Activated naive CD8-positive, alpha-beta T cell treated with anti-CD3 and anti-CD28 coated beads, Interleukin-2, amount 10 ng/mL, durations not matched to agents 7 days and 5 days (primary cell): ENCODE measurements at regions of chr13 and their contacts with region 1.

Region 1: GRCh38 chr13:40666045-40666904 is at the start of gene FOXO1:
- DNase-seq: peak; percentile 97
- ATAC-seq: peak; percentile 66
- H3K4me3 Mint-ChIP-seq: peak within 1 kb of the TSS; percentile 90
- H3K27ac Mint-ChIP-seq: peak within 1 kb of the TSS; percentile 92
- H3K4me1 Mint-ChIP-seq: peaks cover 38% of the 10 kb centered on the region
- H3K27me3 Mint-ChIP-seq: no peaks in the 10 kb centered on the region
- total RNA-seq, gene FOXO1: 36.7 to 39.8 TPM

Region 2: DNA sequence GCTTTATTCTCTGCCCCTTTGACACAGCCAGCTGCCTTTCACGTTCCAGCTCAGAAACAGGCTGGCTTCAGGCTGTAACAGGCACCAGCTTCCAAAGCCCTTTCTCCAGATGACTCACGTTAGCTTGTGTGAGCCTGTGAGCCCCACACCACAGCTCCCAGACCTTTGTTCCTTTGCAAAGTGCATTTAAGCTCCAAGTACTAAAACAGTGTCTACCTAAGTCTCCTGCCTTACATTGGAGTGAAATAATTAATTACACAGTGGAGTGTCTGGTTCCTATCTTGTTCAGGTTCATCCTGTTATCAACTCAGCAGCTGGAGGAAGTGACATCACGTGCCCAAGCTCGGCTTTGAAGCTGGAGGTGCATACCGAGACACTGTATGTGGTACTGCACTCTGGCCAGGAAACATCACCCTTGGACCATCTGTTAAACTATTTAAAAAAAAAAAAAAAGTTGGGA is 475.6 kb before region 1 on chr13:
- POLR2A ChIA-PET with region 1: interaction called, 28 read pairs
- DNase-seq: peak; percentile 59
- ATAC-seq: peak; percentile 32
- H3K4me3 Mint-ChIP-seq: peak overlapping the region; percentile 80
- H3K27ac Mint-ChIP-seq: peak overlapping the region; percentile 97
- H3K4me1 Mint-ChIP-seq: peaks cover 58% of the 10 kb centered on the region
- H3K27me3 Mint-ChIP-seq: no peaks in the 10 kb centered on the region

Region 3: DNA sequence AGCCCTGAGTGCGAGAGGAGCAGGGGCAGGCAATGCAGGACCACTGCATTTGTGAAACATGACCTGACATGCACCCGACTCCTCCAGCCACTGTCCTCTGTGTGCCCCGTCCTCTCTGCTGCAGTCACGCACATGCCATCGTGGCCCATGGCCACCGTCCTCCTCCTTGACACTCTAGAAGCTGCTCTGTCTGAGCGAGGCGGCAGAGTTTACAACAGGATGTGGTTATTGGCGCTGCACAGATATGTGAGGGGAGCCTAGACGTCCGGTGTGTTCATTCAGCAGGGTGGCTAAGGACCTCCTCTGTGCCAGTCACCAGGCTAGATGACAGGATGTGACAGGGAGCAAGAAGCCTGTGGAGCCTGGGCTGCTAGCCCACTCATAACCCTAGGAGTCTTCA is 277.7 kb before region 1 on chr13:
- POLR2A ChIA-PET with region 1: interaction called, 22 read pairs
- DNase-seq: peak; percentile 77
- ATAC-seq: peak; percentile 98
- H3K4me3 Mint-ChIP-seq: peak overlapping the region; percentile 83
- H3K27ac Mint-ChIP-seq: peak overlapping the region; percentile 98
- H3K4me1 Mint-ChIP-seq: peaks cover 52% of the 10 kb centered on the region
- H3K27me3 Mint-ChIP-seq: no peaks in the 10 kb centered on the region

Region 4: DNA sequence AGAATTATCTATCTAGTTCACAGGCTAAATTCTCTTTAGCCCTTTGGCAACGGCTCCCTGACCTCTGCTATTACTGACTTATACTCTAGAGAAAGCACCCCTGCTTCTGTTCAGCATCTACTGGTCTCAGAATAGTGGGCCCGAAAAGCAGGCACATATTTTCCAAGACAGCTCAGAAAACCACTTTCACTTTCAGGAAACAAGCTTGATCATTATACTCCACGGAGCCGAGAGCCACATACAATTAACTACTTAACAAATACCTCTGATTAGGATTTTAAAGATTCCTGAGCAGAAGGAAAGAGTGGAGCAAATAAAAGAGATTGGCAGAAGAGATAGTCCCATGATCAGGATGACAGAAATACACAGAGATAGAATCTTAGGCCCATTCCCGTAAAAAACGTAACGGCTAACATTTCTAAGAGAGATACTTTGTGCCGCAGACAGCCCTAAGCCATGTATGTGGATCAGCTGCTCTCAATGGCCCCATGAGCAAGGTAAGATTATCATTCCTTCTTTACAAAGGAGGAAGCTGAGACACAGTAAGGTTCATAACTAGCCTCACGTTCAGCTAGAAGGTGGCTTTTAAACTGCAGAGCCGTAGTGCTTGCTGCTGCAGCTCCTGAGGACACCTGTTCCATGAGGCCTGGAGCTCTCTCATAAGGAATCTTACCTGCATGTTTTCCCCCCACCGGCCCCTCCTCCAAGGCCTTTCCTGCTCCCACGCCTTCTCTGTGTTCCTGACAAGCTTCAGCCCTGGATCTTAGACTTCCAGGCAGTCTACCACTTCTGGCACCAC is 227.1 kb before region 1 on chr13:
- POLR2A ChIA-PET with region 1: interaction called, 18 read pairs
- DNase-seq: no peak
- ATAC-seq: peak; percentile 69
- H3K4me3 Mint-ChIP-seq: peak overlapping the region; percentile 72
- H3K27ac Mint-ChIP-seq: peak overlapping the region; percentile 59
- H3K4me1 Mint-ChIP-seq: peaks cover 31% of the 10 kb centered on the region
- H3K27me3 Mint-ChIP-seq: no peaks in the 10 kb centered on the region

Region 5: GRCh38 chr13:40485611-40486517 is 180.4 kb before region 1 on chr13:
- POLR2A ChIA-PET with region 1: interaction called, 28 read pairs
- DNase-seq: peak; percentile 67
- ATAC-seq: peak; percentile 91
- H3K4me3 Mint-ChIP-seq: peak overlapping the region; percentile 43
- H3K27ac Mint-ChIP-seq: peak overlapping the region; percentile 89
- H3K4me1 Mint-ChIP-seq: peaks cover 55% of the 10 kb centered on the region
- H3K27me3 Mint-ChIP-seq: no peaks in the 10 kb centered on the region

Region 6: DNA sequence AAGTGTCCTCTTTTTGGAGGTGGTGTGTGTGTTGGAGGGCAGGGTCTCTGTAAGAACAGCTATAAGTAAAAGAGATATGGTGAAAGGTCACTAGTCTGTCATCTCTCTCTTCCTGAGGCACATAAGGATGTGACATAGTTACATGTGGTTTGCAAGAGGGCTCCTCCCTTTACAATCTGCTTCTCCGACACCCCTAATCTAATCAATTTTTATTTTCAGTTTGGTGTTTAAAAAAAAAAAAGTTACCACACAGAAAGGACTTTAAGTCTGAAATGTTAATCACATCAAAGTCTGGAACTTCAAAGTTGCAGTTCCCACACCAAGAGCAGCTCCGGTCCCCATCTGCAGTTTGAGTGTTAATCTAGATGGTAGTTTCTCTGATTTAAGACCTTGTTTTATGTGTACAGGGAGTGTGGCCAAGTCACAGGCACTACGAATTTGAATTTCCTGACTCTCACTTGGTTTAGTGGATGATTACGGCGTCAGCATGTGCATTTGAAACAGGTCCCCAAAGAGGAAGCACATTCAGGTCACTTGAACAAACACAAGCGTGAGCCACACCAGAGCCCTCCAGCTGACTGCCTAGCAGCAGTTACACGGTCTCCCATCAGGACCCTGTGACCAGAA is 53.0 kb before region 1 on chr13:
- POLR2A ChIA-PET with region 1: interaction called, 23 read pairs
- DNase-seq: peak; percentile 54
- ATAC-seq: peak; percentile 87
- H3K4me3 Mint-ChIP-seq: peak overlapping the region; percentile 80
- H3K27ac Mint-ChIP-seq: peak overlapping the region; percentile 91
- H3K4me1 Mint-ChIP-seq: peaks cover 66% of the 10 kb centered on the region
- H3K27me3 Mint-ChIP-seq: no peaks in the 10 kb centered on the region

Region 7: GRCh38 chr13:40648040-40648439 is 18.2 kb before region 1 on chr13:
- POLR2A ChIA-PET with region 1: interaction called, 14 read pairs
- DNase-seq: no peak
- ATAC-seq: no peak
- H3K4me3 Mint-ChIP-seq: no peak overlapping the region
- H3K27ac Mint-ChIP-seq: no peak overlapping the region
- H3K4me1 Mint-ChIP-seq: peaks cover 90% of the 10 kb centered on the region
- H3K27me3 Mint-ChIP-seq: no peaks in the 10 kb centered on the region